ENCODE measurements at regions of chr13 and their contacts with region 1.

Region 1: GRCh38 chr13:111046590-111047141 is 68.4 kb upstream of the ARHGEF7 start:
- DNase-seq: peak in 1 of 2 donors; percentile 62
- ATAC-seq: no peak
- H3K4me3 ChIP-seq: no peak overlapping the region
- H3K27ac ChIP-seq: no peak overlapping the region
- H3K4me1 ChIP-seq: no peaks in the 10 kb centered on the region
- H3K27me3 ChIP-seq: no peaks in the 10 kb centered on the region

Region 2: DNA sequence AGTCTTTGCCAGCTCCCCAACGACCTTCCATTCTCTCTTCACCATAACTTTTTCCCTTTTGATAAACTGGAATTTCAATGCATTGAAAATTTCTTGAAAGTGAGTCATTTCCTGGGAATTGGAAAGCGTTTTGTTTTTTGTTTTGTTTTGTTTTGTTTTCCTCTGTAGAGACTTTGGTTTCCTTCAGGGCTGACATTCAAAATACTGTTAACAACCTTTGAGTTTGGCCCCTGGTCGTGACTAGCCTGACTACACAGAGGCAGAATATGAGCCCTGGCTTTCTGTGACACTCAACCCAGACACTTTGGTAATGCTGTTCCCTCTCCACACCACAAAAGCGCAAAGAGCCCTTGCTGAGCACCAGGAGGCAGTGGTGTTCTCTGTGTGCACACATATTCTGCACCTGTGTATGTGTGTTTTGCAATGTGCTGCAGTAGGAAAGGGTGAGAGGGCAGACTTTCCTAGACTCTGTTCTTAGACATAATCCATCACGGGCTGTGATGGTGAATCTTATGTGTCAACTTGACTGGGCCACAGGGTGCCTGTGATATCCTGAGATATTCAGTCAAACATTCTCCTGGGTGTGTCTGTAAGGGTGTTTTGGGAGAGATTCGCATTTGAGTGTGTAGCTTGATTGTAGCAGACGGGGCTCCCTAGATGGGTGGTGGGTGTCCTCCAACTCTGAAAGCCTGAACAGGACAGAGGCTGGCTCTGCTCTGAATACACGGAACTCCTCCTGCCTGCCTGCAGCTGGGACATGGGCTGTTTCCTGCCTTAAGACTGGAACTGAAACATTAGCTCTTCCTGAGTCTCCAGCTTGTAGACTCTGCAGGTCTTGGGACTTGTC is 102.3 kb before region 1 on chr13:
- intact Hi-C with region 1: loop called (anchors 1 to 5 kb)
- DNase-seq: no peak
- ATAC-seq: peak; percentile 58
- H3K4me3 ChIP-seq: no peak overlapping the region
- H3K27ac ChIP-seq: no peak overlapping the region
- H3K4me1 ChIP-seq: no peaks in the 10 kb centered on the region
- H3K27me3 ChIP-seq: no peaks in the 10 kb centered on the region

Region 3: GRCh38 chr13:111011899-111012298 is 34.8 kb before region 1 on chr13:
- intact Hi-C with region 1: loop called in 1 of 2 experiments (anchors 5 kb)
- DNase-seq: no peak
- ATAC-seq: no peak
- H3K4me3 ChIP-seq: no peak overlapping the region
- H3K27ac ChIP-seq: no peak overlapping the region
- H3K4me1 ChIP-seq: peaks cover 0 to 3% of the 10 kb centered on the region in 2 donors
- H3K27me3 ChIP-seq: no peaks in the 10 kb centered on the region

Region 4: GRCh38 chr13:111572956-111573761 is 526.5 kb after region 1 on chr13:
- intact Hi-C with region 1: no loop called
- DNase-seq: peak in 1 of 2 donors; percentile 58
- ATAC-seq: no peak
- H3K4me3 ChIP-seq: no peak overlapping the region
- H3K27ac ChIP-seq: no peak overlapping the region
- H3K4me1 ChIP-seq: no peaks in the 10 kb centered on the region
- H3K27me3 ChIP-seq: no peaks in the 10 kb centered on the region

Measured in aorta (tissue), 5 donors.